SK-N-SH (cell line): ENCODE measurements at regions of chr7 and their contacts with region 1.

Region 1: GRCh38 chr7:128031901-128032604 is 816 bp upstream of the LRRC4 start:
- DNase-seq: peak; percentile 92
- H3K4me3 ChIP-seq: peak overlapping the region; percentile 55 to 62
- H3K27ac ChIP-seq: peak overlapping the region in 1 of 2 experiments; percentile 51; a peak in 2 of 4 replicates
- H3K4me1 ChIP-seq: peaks cover 0 to 19% of the 10 kb centered on the region in 2 experiments; a peak in 2 of 4 replicates
- H3K27me3 ChIP-seq: no peaks in the 10 kb centered on the region
- CTCF ChIP-seq: peak; percentile 44
- EP300 ChIP-seq: peak in 1 of 2 experiments; percentile 11; a peak in 1 of 4 replicates
- RAD21 ChIP-seq: peak; percentile 43

Region 2: GRCh38 chr7:128020159-128020558 is 11.9 kb before region 1 on chr7:
- CTCF ChIA-PET with region 1: interaction called, 21 read pairs
- POLR2A ChIA-PET with region 1: interaction called, 3 read pairs
- DNase-seq: peak; percentile 32
- H3K4me3 ChIP-seq: no peak overlapping the region; a peak in 1 of 4 replicates
- H3K27ac ChIP-seq: no peak overlapping the region
- H3K4me1 ChIP-seq: peaks cover 35 to 61% of the 10 kb centered on the region in 2 experiments
- H3K27me3 ChIP-seq: no peaks in the 10 kb centered on the region
- CTCF ChIP-seq: peak; percentile 63
- EP300 ChIP-seq: no peak
- RAD21 ChIP-seq: 0 out of 2 replicates have a peak, but pooled peaks have one; percentile 22

Region 3: GRCh38 chr7:128053023-128053422 is 21.0 kb after region 1 on chr7:
- CTCF ChIA-PET with region 1: interaction called, 15 read pairs
- POLR2A ChIA-PET with region 1: no interaction called
- DNase-seq: peak; percentile 56
- H3K4me3 ChIP-seq: no peak overlapping the region
- H3K27ac ChIP-seq: peak overlapping the region in 1 of 2 experiments; percentile 19; a peak in 1 of 4 replicates
- H3K4me1 ChIP-seq: peaks cover 6 to 50% of the 10 kb centered on the region in 2 experiments; a peak in 3 of 4 replicates
- H3K27me3 ChIP-seq: no peaks in the 10 kb centered on the region
- CTCF ChIP-seq: no peak
- EP300 ChIP-seq: peak in 1 of 2 experiments; percentile 41; a peak in 1 of 4 replicates
- RAD21 ChIP-seq: no peak

Region 4: DNA sequence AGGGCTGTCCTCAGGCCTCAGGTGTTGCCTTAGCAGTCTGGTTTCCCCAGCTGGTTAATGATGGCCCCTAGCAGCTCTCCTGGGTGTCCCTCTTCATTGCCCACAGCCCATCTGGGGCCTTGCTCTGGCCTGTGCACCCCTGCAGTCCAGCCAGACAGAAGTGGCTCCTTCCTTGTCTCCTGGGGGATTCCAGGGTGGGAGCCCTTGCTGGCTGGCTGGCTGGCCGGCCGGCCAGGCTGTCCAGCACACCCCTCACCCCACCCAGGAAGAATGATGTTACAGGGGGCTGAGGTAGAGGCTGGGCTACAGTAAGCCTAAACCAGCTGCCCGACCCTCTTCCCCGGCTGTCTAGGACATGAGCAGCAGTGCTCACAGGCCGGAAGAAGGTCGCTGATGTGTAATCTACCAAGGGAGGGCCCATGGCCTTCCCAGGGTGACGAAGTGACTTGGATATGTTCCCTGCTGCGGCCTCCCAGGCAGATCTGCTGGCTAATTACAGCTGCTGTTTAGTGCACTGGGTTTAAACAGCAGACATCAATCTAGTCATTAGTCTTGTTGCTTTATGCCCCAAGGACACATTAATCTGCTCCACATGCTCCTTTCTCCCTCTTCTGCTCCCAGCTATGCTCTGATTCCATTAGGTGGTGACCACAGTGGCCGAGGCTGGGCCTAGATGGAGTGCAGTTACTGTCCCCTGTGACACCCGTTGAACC is 53.0 kb after region 1 on chr7:
- CTCF ChIA-PET with region 1: interaction called, 11 read pairs
- POLR2A ChIA-PET with region 1: no interaction called
- DNase-seq: peak; percentile 96
- H3K4me3 ChIP-seq: no peak overlapping the region
- H3K27ac ChIP-seq: peak overlapping the region; percentile 51 to 99; a peak in 3 of 4 replicates
- H3K4me1 ChIP-seq: peaks cover 0 to 63% of the 10 kb centered on the region in 2 experiments; a peak in 2 of 4 replicates
- H3K27me3 ChIP-seq: no peaks in the 10 kb centered on the region
- CTCF ChIP-seq: no peak
- EP300 ChIP-seq: peak in 1 of 2 experiments; percentile 99; a peak in 2 of 4 replicates
- RAD21 ChIP-seq: 0 out of 2 replicates have a peak, but pooled peaks have one; percentile 18